CD8-positive, alpha-beta memory T cell (primary cell): ENCODE measurements at regions of chr3 and their contacts with region 1.

Region 1: DNA sequence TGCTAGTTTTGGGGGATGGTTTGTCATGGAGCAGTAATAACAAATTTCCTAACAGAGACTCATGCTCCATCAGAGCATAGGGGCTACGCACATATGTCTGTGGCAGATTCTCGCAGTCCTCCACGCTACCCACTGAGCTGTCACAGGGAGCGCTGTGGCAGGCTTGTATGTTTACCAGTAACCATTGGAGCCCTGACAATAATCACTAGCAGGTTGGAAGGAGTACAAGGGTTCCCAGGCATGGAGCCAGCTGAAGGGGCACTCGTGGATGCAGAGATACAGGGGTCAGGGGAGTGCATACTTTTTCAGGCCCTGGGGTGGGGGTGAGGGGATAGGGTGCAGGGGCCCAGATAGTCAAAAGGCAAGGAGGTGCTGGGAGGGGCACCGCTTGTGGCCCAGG is 7.9 kb upstream of the GP9 start:
- DNase-seq: no peak
- H3K4me3 ChIP-seq: no peak overlapping the region
- H3K4me3 Mint-ChIP-seq: peak overlapping the region in 1 of 7 donors; percentile 48
- H3K27ac ChIP-seq: no peak overlapping the region
- H3K27ac Mint-ChIP-seq: no peak overlapping the region
- H3K4me1 ChIP-seq: peaks cover 5% of the 10 kb centered on the region
- H3K4me1 Mint-ChIP-seq: peaks cover 5 to 8% (median 7%) of the 10 kb centered on the region in 3 donors
- H3K27me3 ChIP-seq: no peaks in the 10 kb centered on the region
- H3K27me3 Mint-ChIP-seq: peaks cover 0 to 5% of the 10 kb centered on the region in 2 donors

Region 2: DNA sequence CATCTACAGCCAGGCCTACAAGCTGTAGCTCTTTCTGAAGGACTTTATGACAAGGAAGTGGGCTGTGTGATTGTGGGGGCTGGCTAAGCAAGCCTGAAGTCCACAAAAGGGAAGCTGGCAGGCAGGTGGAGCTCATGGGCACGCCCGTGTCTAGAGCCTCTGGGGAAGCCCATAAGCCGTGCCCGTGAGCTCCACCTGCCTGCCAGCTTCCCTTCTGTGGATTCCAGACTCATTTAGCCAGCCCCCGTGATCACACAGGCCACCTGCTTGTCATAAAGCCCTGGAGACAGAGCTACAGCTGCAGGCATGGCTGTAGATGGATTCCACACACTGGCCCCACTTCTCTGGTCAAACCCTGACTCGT is 36.3 kb before region 1 on chr3:
- CTCF ChIA-PET with region 1: interaction called, 22 read pairs
- POLR2A ChIA-PET with region 1: interaction called, 3 read pairs
- DNase-seq: peak; percentile 49 to 80 (median 66)
- H3K4me3 ChIP-seq: peak overlapping the region; percentile 60
- H3K4me3 Mint-ChIP-seq: peak overlapping the region; percentile 66 to 85 (median 77)
- H3K27ac ChIP-seq: peak overlapping the region; percentile 57
- H3K27ac Mint-ChIP-seq: peak overlapping the region; percentile 82 to 100 (median 94)
- H3K4me1 ChIP-seq: peaks cover 40% of the 10 kb centered on the region
- H3K4me1 Mint-ChIP-seq: peaks cover 42 to 50% (median 48%) of the 10 kb centered on the region in 3 donors
- H3K27me3 ChIP-seq: no peaks in the 10 kb centered on the region
- H3K27me3 Mint-ChIP-seq: no peaks in the 10 kb centered on the region

Region 3: GRCh38 chr3:129040579-129041300 is 11.9 kb before region 1 on chr3:
- CTCF ChIA-PET with region 1: interaction called, 11 read pairs
- POLR2A ChIA-PET with region 1: no interaction called
- DNase-seq: no peak
- H3K4me3 ChIP-seq: no peak overlapping the region
- H3K4me3 Mint-ChIP-seq: no peak overlapping the region
- H3K27ac ChIP-seq: no peak overlapping the region
- H3K27ac Mint-ChIP-seq: no peak overlapping the region
- H3K4me1 ChIP-seq: peaks cover 4% of the 10 kb centered on the region
- H3K4me1 Mint-ChIP-seq: peaks cover 4 to 13% (median 4%) of the 10 kb centered on the region in 3 donors
- H3K27me3 ChIP-seq: no peaks in the 10 kb centered on the region
- H3K27me3 Mint-ChIP-seq: peaks cover 15 to 39% of the 10 kb centered on the region in 2 donors

Region 4: DNA sequence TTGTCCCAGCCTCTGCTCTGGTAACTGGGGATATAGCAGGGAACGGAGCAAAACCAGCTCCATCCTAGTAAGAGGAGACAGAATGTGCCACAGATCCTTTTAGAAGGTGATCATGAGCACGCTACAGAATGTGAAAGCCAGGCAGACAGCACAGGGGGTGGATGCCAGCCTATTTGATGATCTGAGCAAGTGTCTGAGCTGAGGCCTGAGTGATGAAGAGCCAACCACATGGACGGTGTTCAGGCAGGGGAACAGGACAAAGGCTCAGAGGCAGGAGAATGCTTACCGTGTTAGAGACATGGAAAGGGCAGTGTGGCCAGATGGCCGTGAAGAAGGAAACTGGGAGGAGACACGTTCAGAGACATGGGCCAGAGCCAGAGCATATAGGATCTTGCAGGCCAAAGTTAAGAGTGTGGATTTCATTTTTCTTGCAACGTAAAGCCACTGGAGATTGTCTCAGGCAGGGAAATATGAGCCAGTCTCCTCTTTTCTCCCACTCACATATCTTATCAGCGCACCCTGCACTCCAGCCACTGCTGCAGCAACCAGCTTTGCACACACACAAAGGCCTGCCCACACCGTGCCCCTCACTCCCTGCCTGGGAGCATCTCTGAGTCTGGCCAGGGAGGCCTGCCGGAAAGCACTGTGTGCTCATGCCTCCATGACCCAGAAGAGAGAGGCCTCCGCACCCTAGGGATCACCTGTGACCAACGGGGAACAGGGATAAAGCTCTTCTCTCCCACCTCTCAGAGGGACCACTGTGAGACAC is 48.9 kb after region 1 on chr3:
- CTCF ChIA-PET with region 1: interaction called, 14 read pairs
- POLR2A ChIA-PET with region 1: no interaction called
- DNase-seq: no peak
- H3K4me3 ChIP-seq: no peak overlapping the region
- H3K4me3 Mint-ChIP-seq: peak overlapping the region in 1 of 7 donors; percentile 15
- H3K27ac ChIP-seq: no peak overlapping the region
- H3K27ac Mint-ChIP-seq: peak overlapping the region in 7 of 8 donors; percentile 49 to 83 (median 72)
- H3K4me1 ChIP-seq: peaks cover 62% of the 10 kb centered on the region
- H3K4me1 Mint-ChIP-seq: peaks cover 53 to 78% (median 67%) of the 10 kb centered on the region in 3 donors
- H3K27me3 ChIP-seq: no peaks in the 10 kb centered on the region
- H3K27me3 Mint-ChIP-seq: peaks cover 0 to 3% of the 10 kb centered on the region in 2 donors

Region 5: GRCh38 chr3:129160891-129161859 is 108.5 kb after region 1 on chr3 and contains the start of gene ISY1:
- CTCF ChIA-PET with region 1: interaction called, 21 read pairs
- POLR2A ChIA-PET with region 1: interaction called, 4 read pairs
- DNase-seq: peak; percentile 80 to 93 (median 91)
- H3K4me3 ChIP-seq: peak within 1 kb of the TSS; percentile 98
- H3K4me3 Mint-ChIP-seq: peak within 1 kb of the TSS; percentile 95 to 99 (median 98)
- H3K27ac ChIP-seq: peak within 1 kb of the TSS; percentile 95
- H3K27ac Mint-ChIP-seq: peak within 1 kb of the TSS; percentile 97 to 100 (median 99)
- H3K4me1 ChIP-seq: peaks cover 21% of the 10 kb centered on the region
- H3K4me1 Mint-ChIP-seq: peaks cover 31 to 53% (median 42%) of the 10 kb centered on the region in 3 donors
- H3K27me3 ChIP-seq: no peaks in the 10 kb centered on the region
- H3K27me3 Mint-ChIP-seq: peaks cover 0 to 4% of the 10 kb centered on the region in 2 donors
- total RNA-seq, gene ISY1: 84.6 to 94.7 TPM

Region 6: GRCh38 chr3:129249276-129250065 is 196.8 kb after region 1 on chr3 and contains the start of gene COPG1:
- CTCF ChIA-PET with region 1: interaction called, 79 read pairs
- POLR2A ChIA-PET with region 1: interaction called, 5 read pairs
- DNase-seq: peak; percentile 77 to 91 (median 88)
- H3K4me3 ChIP-seq: peak within 1 kb of the TSS; percentile 100
- H3K4me3 Mint-ChIP-seq: peak within 1 kb of the TSS; percentile 96 to 100 (median 97)
- H3K27ac ChIP-seq: peak within 1 kb of the TSS; percentile 97
- H3K27ac Mint-ChIP-seq: peak within 1 kb of the TSS; percentile 95 to 100 (median 98)
- H3K4me1 ChIP-seq: peaks cover 25% of the 10 kb centered on the region
- H3K4me1 Mint-ChIP-seq: peaks cover 37 to 55% (median 42%) of the 10 kb centered on the region in 3 donors
- H3K27me3 ChIP-seq: no peaks in the 10 kb centered on the region
- H3K27me3 Mint-ChIP-seq: peaks cover 0 to 2% of the 10 kb centered on the region in 2 donors
- total RNA-seq, gene COPG1: 134 to 136 TPM

Region 7: GRCh38 chr3:129644830-129645229 is 592.2 kb after region 1 on chr3:
- CTCF ChIA-PET with region 1: no interaction called
- POLR2A ChIA-PET with region 1: no interaction called
- DNase-seq: no peak
- H3K4me3 ChIP-seq: no peak overlapping the region
- H3K4me3 Mint-ChIP-seq: no peak overlapping the region
- H3K27ac ChIP-seq: no peak overlapping the region
- H3K27ac Mint-ChIP-seq: no peak overlapping the region
- H3K4me1 ChIP-seq: no peaks in the 10 kb centered on the region
- H3K4me1 Mint-ChIP-seq: no peaks in the 10 kb centered on the region
- H3K27me3 ChIP-seq: no peaks in the 10 kb centered on the region
- H3K27me3 Mint-ChIP-seq: peaks cover 0 to 2% of the 10 kb centered on the region in 2 donors